AG04450 (cell line): ENCODE measurements at regions of chr5 and their contacts with region 1.

Region 1: GRCh38 chr5:98768160-98769005 is 5.1 kb upstream of the RGMB start:
- DNase-seq: no peak
- H3K4me3 ChIP-seq: peak overlapping the region; percentile 92
- H3K27ac ChIP-seq: peak overlapping the region; percentile 97
- H3K27me3 ChIP-seq: no peaks in the 10 kb centered on the region
- CTCF ChIP-seq: peak; percentile 99

Region 2: DNA sequence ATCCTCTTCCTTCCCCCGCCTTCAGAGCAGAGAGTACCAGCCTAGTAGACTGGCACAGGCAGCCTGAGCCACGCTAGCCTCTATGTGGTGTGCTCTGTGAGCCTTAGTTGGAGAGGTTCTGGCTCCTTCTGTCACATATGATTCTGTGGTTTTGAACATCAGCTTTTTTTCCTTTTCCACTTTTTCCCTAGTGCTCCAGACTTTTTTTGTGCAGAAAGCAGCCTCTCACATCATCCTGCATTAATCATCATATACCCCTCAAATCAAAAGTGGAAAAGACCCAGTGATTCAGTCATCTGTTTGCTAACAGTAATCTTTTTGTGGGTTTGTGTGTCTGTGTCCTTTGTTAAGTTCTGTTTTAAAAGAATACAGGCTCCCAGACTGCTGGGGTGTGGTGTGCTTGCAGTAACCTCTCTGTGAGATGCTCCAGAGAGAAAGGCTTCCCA is 658.8 kb before region 1 on chr5:
- CTCF ChIA-PET with region 1: interaction called, 6 read pairs
- POLR2A ChIA-PET with region 1: interaction called, 30 read pairs
- DNase-seq: peak; percentile 51
- H3K4me3 ChIP-seq: peak overlapping the region; percentile 20; the same call in 1 of the 2 replicates
- H3K27ac ChIP-seq: peak overlapping the region; percentile 96
- H3K27me3 ChIP-seq: no peaks in the 10 kb centered on the region
- CTCF ChIP-seq: no peak

Region 3: GRCh38 chr5:98341038-98342032 is 427.0 kb before region 1 on chr5:
- CTCF ChIA-PET with region 1: interaction called, 12 read pairs
- POLR2A ChIA-PET with region 1: no interaction called
- DNase-seq: peak; percentile 94
- H3K4me3 ChIP-seq: no peak overlapping the region
- H3K27ac ChIP-seq: peak overlapping the region; percentile 84
- H3K27me3 ChIP-seq: no peaks in the 10 kb centered on the region
- CTCF ChIP-seq: no peak

Region 4: DNA sequence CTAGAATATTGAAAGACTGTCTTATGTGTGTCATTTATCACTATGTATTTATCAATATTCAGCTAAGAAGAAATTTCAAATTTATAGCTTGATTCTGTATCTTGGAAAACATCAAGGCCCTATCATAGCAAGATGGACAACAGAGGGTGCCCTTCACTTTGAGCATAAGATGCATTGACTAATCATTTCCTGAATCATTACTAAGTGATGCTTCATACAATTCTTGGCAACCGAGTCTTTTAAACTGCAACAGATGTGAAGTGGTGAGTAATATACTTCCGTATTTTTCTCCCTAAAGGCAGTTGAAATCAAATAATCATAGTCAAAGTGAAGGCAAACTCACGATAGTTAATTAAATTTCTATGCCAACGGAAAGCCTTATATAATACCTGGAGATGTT is 313.5 kb before region 1 on chr5:
- CTCF ChIA-PET with region 1: interaction called, 25 read pairs
- POLR2A ChIA-PET with region 1: interaction called, 4 read pairs
- DNase-seq: peak; percentile 78
- H3K4me3 ChIP-seq: no peak overlapping the region
- H3K27ac ChIP-seq: no peak overlapping the region
- H3K27me3 ChIP-seq: no peaks in the 10 kb centered on the region
- CTCF ChIP-seq: peak; percentile 50

Region 5: DNA sequence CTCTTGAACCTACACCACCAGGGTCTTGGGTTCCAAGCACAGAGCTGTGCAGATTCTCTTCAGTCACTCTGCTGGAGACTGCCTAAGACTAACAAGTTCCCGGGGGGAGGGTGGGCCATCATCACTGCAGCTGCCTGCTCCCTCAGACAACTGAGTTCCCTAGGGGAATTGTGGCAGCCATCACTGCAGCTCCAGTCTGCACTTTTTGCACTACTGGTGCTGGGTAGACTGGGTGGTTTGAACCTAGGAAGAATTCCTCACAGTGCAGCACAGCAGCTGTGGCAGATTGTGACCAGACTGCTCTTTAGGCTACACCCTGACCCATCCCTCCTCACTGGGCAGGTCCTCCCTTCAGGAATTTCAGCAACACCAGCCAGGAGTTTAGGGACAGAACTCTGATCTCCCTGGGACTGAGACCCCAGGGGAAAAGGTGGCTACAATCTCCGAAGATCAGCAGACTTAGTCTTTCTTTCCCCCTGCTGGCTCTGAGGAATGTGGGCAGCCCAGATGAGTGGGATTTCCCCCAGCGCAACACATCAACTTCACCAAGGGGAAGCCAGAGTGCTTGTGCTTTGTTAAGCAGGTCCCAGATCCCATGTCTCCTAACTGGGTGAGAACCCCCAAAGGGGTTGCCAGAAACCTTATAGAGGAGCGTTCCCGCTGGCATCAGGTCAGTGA is 25.8 kb before region 1 on chr5:
- CTCF ChIA-PET with region 1: interaction called, 16 read pairs
- POLR2A ChIA-PET with region 1: no interaction called
- DNase-seq: no peak
- H3K4me3 ChIP-seq: no peak overlapping the region
- H3K27ac ChIP-seq: no peak overlapping the region
- H3K27me3 ChIP-seq: no peaks in the 10 kb centered on the region
- CTCF ChIP-seq: no peak

Region 6: GRCh38 chr5:98796197-98796972 is 28.0 kb after region 1 on chr5:
- CTCF ChIA-PET with region 1: interaction called, 15 read pairs
- POLR2A ChIA-PET with region 1: interaction called, 5 read pairs
- DNase-seq: no peak
- H3K4me3 ChIP-seq: no peak overlapping the region
- H3K27ac ChIP-seq: peak overlapping the region; percentile 21
- H3K27me3 ChIP-seq: no peaks in the 10 kb centered on the region
- CTCF ChIP-seq: peak; percentile 83